Activated naive CD4-positive, alpha-beta T cell treated with anti-CD3 and anti-CD28 coated beads for 36 hours (primary cell): ENCODE measurements at regions of chr1 and their contacts with region 1.

Region 1: GRCh38 chr1:186337554-186337953 is 37.5 kb downstream of the TPR start:
- DNase-seq: no peak
- H3K4me3 Mint-ChIP-seq: no peak overlapping the region
- H3K27ac Mint-ChIP-seq: no peak overlapping the region
- H3K4me1 Mint-ChIP-seq: peaks cover 1% of the 10 kb centered on the region
- H3K27me3 Mint-ChIP-seq: no peaks in the 10 kb centered on the region

Region 2: DNA sequence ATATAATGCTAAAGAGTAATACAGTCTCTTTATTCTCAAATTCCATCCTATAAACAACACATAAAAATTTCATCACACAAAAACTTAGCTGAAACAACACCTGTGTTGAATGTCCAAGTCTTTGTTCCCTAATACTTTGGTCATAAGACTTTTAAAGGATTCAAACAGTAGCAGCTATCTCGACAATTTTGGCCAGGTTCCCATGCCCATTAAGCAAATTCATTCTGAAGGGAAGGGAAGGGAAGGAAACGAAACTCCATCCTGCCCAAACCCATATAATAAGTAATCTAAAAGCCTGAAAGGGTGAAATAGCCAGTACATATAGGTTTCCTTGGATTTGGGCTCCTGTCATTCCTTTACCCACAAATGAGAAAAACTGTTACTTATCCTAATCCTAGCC is 1028.0 kb before region 1 on chr1:
- CTCF ChIA-PET with region 1: no interaction called
- intact Hi-C with region 1: loop called (anchors 10 kb)
- DNase-seq: no peak
- H3K4me3 Mint-ChIP-seq: no peak overlapping the region
- H3K27ac Mint-ChIP-seq: no peak overlapping the region
- H3K4me1 Mint-ChIP-seq: peaks cover 31% of the 10 kb centered on the region
- H3K27me3 Mint-ChIP-seq: no peaks in the 10 kb centered on the region

Region 3: DNA sequence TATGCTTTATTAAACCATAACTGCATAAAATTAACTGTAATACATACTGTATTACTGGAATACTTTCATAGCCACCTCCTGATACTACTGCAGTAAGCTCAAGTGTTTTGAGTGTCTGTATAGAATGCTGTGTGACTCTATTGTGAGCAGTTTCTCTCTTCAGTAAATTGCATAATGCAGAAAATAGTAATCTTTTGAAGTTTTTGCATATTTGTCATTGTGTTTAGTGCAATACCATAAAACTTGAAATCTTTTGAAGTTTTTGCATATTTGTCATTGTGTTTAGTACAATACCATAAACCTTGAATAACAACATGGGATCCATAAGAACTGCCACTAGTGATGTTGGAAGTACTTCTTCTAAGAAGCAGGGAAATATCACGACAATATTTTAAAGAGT is 26.3 kb after region 1 on chr1:
- CTCF ChIA-PET with region 1: interaction called, 3 read pairs
- intact Hi-C with region 1: loop called (anchors 2 kb)
- DNase-seq: no peak
- H3K4me3 Mint-ChIP-seq: no peak overlapping the region
- H3K27ac Mint-ChIP-seq: no peak overlapping the region
- H3K4me1 Mint-ChIP-seq: peaks cover 2% of the 10 kb centered on the region
- H3K27me3 Mint-ChIP-seq: no peaks in the 10 kb centered on the region

Region 4: GRCh38 chr1:187053876-187054275 is 716.3 kb after region 1 on chr1:
- CTCF ChIA-PET with region 1: no interaction called
- intact Hi-C with region 1: no loop called
- DNase-seq: no peak
- H3K4me3 Mint-ChIP-seq: no peak overlapping the region
- H3K27ac Mint-ChIP-seq: no peak overlapping the region
- H3K4me1 Mint-ChIP-seq: peaks cover 2% of the 10 kb centered on the region
- H3K27me3 Mint-ChIP-seq: no peaks in the 10 kb centered on the region